ENCODE measurements at regions of chr2 and their contacts with region 1.

Region 1: GRCh38 chr2:31333527-31334183 is 80.9 kb downstream of the XDH start:
- DNase-seq: peak; percentile 72
- CTCF ChIP-seq: peak; percentile 90

Region 2: GRCh38 chr2:30862054-30862651 is 471.5 kb before region 1 on chr2:
- CTCF ChIA-PET with region 1: interaction called, 40 read pairs
- POLR2A ChIA-PET with region 1: no interaction called
- DNase-seq: peak; percentile 57
- CTCF ChIP-seq: peak; percentile 78

Region 3: GRCh38 chr2:31312898-31313297 is 20.8 kb before region 1 on chr2:
- CTCF ChIA-PET with region 1: interaction called, 10 read pairs
- POLR2A ChIA-PET with region 1: no interaction called
- DNase-seq: no peak
- CTCF ChIP-seq: no peak

Region 4: DNA sequence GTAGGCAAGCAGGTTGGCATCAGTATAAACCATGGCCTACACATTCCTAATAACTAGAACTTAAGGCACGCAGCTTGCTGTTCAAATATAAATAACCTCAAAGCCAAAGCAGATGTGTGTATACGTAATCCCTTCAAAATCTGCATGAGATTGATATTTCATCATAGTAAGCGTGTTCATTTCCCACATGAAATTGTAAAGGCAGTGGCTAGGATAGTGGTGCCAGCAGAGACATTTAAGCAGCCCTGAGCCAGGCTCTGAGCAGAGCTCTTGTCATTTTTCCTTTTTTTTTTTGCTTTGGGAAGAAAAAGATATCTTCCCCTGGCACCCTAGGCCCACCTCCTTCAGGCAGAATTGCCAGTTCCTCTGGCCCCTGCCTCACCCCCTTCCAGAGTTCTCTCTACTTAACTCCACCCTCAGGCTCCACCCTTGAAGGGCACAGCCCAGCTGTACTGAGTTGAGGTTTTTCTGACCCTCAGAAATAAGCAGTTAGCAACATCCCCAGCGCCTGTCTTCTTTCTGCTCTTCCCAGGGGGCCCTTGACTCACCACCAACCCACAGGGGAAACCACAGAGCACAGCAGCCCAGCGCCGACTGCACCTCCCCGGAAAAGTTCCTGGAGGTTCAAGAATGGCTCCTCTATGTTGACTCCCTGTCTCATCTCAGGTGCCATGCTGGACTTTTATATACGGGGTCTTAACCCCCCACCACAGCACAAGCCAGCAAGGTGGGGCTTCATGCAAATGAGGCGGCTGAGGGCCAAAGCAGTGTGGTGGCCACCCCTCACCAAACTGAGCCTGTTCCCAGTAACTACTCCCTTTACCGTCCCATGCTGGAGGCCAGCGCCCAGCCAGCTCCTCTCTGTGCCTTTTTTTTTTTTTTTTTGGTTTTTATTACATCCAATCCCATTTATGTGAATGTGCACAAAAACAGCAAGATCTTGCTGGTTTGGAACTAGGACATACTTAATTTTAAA is 15.0 kb before region 1 on chr2:
- CTCF ChIA-PET with region 1: interaction called, 52 read pairs
- POLR2A ChIA-PET with region 1: no interaction called
- DNase-seq: no peak
- CTCF ChIP-seq: no peak

Region 5: GRCh38 chr2:31344447-31344846 is 10.8 kb after region 1 on chr2:
- CTCF ChIA-PET with region 1: interaction called, 15 read pairs
- POLR2A ChIA-PET with region 1: no interaction called
- DNase-seq: no peak
- CTCF ChIP-seq: no peak

Measured in GM10248 (cell line).